HepG2 (cell line): ENCODE measurements at regions of chr1 and their contacts with region 1.

Region 1: DNA sequence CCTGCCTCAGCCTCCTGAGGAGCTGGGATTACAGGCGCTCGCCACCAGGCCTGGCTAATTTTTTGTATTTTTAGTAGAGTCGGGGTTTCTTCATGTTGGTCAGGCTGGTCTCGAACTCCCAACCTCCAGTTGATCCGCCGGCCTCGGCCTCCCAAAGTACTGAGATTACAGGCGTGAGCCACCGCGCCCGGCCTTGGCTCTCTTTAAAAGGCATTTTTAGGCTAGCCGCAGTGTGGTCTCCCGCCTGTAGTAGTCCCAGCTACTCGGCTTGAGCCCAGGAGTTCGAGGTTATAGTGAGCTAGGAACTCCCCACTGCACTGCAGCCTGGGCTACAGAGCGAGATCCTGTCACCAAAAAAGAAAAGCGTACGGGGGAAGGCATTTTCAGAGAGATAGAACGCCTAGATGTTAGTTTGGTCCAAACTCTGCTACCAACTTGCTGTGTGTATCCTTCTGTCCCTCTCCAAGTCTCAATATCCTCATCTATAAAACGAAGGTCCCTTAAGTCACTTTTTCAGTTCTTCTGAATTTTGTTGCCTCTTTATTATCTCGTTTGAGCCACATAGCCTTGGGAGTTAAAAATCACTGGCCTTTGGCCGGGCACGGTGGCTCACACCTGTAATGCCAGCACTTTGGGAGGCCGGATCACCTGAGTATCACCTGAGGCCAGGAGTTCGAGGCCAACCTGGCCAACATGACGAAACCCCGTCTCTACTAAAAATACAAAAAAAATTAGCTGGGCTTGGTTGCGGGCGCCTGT is 734 bp downstream of the MED18 start:
- DNase-seq: peak; percentile 21
- ATAC-seq: peak; percentile 75
- H3K4me3 ChIP-seq: peak overlapping the region; percentile 61 to 90 (median 80)
- H3K27ac ChIP-seq: peak overlapping the region; percentile 90
- H3K4me1 ChIP-seq: peaks cover 32% of the 10 kb centered on the region
- H3K27me3 ChIP-seq: no peaks in the 10 kb centered on the region
- CTCF ChIP-seq: no peak
- EP300 ChIP-seq: no peak
- POLR2A ChIP-seq: no peak
- RAD21 ChIP-seq: no peak

Region 2: DNA sequence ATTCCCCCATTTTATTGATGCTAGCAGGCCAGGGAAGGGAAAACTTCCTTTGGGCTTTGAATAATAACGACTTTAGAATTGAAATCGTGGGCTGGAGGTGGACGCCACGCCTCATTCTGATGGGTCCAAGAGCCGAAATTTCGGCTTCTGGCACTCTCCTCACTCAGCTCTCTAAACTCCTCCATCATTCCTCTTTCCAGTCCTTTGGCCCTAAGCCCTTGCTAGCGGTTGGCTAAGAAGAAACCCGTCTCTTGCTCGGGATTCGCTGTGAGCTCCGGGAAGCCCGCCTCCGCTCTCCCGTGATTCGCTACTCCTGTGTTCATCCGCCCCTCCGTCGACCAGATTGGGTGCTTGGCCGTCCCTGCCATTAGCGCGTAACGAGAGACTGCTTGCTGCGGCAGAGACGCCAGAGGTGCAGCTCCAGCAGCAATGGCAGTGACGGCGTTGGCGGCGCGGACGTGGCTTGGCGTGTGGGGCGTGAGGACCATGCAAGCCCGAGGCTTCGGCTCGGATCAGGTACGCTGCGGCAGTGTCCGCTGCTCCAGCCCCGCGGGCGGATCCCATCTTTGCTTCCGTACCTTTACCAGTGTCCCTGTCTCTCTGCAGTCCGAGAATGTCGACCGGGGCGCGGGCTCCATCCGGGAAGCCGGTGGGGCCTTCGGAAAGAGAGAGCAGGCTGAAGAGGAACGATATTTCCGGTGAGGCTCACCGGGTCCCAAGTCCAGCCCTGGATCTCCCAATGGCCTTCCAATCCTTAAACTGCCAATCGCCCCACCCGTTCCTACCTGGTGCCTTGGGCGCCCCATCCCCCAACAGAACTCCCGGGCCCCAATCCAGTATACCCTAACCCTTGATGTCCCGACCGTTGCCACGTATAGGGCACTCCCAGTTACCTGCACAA is 93.6 kb before region 1 on chr1 and contains the start of gene ATP5IF1:
- CTCF ChIA-PET with region 1: no interaction called
- POLR2A ChIA-PET with region 1: interaction called, 13 read pairs
- in situ Hi-C with region 1: no loop called
- intact Hi-C with region 1: no loop called
- DNase-seq: peak; percentile 96
- ATAC-seq: peak; percentile 96
- H3K4me3 ChIP-seq: peak within 1 kb of the TSS; percentile 82 to 95 (median 93)
- H3K27ac ChIP-seq: peak within 1 kb of the TSS; percentile 91
- H3K4me1 ChIP-seq: peaks cover 40% of the 10 kb centered on the region
- H3K27me3 ChIP-seq: peaks cover 0 to 2% of the 10 kb centered on the region in 2 experiments; a peak in 1 of 5 replicates
- CTCF ChIP-seq: no peak; the same call in 1 of the 2 replicates
- EP300 ChIP-seq: no peak
- POLR2A ChIP-seq: peak; percentile 95 to 99
- RAD21 ChIP-seq: no peak; the same call in 1 of the 2 replicates
- total RNA-seq, gene ATP5IF1: 131 and 143 TPM in 2 replicates

Region 3: GRCh38 chr1:28259307-28260167 is 70.0 kb before region 1 on chr1 and contains the start of gene SESN2:
- CTCF ChIA-PET with region 1: no interaction called
- POLR2A ChIA-PET with region 1: interaction called, 12 read pairs
- in situ Hi-C with region 1: no loop called
- intact Hi-C with region 1: loop called (anchors 10 kb)
- DNase-seq: peak; percentile 95
- ATAC-seq: peak; percentile 92
- H3K4me3 ChIP-seq: peak within 1 kb of the TSS; percentile 98 to 99 (median 99)
- H3K27ac ChIP-seq: peak within 1 kb of the TSS; percentile 70
- H3K4me1 ChIP-seq: peaks cover 58% of the 10 kb centered on the region
- H3K27me3 ChIP-seq: peaks cover 0 to 1% of the 10 kb centered on the region in 2 experiments; a peak in 1 of 5 replicates
- CTCF ChIP-seq: no peak
- EP300 ChIP-seq: 0 out of 4 replicates have a peak, but pooled peaks of 1 of the 2 experiments have one; percentile 27
- POLR2A ChIP-seq: peak; percentile 95 to 96
- RAD21 ChIP-seq: no peak; the same call in 1 of the 2 replicates
- total RNA-seq, gene SESN2: 10.4 and 13.2 TPM in 2 replicates

Region 4: DNA sequence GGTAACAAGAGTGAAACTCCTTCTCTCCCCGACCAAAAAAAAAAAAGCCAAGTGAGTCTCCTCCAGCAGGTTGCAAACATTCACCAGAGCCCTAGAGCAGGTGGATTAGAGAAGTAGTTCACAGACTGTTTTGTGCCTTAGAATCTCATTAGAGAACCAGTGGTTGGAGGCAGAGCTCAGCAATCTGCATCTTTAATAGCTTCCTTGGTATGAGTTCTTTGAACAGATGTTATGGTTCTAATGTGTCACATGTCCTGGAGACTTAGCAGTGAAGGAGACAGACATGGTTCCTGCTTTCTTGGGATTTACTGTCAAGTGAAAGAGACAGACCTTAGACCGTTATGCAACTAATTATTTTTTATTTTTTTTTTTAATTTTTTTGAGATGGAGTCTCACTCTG is 43.5 kb before region 1 on chr1:
- CTCF ChIA-PET with region 1: no interaction called
- POLR2A ChIA-PET with region 1: interaction called, 11 read pairs
- in situ Hi-C with region 1: no loop called
- intact Hi-C with region 1: no loop called
- DNase-seq: no peak
- ATAC-seq: no peak
- H3K4me3 ChIP-seq: no peak overlapping the region
- H3K27ac ChIP-seq: no peak overlapping the region
- H3K4me1 ChIP-seq: peaks cover 46% of the 10 kb centered on the region
- H3K27me3 ChIP-seq: no peaks in the 10 kb centered on the region
- CTCF ChIP-seq: no peak
- EP300 ChIP-seq: no peak
- POLR2A ChIP-seq: no peak
- RAD21 ChIP-seq: no peak

Region 5: GRCh38 chr1:28313710-28314546 is 15.6 kb before region 1 on chr1:
- CTCF ChIA-PET with region 1: no interaction called
- POLR2A ChIA-PET with region 1: interaction called, 23 read pairs
- in situ Hi-C with region 1: no loop called
- intact Hi-C with region 1: no loop called
- DNase-seq: peak; percentile 85
- ATAC-seq: peak; percentile 100
- H3K4me3 ChIP-seq: peak overlapping the region in 2 of 3 experiments; percentile 15 to 43; a peak in 3 of 6 replicates
- H3K27ac ChIP-seq: peak overlapping the region; percentile 54
- H3K4me1 ChIP-seq: peaks cover 24% of the 10 kb centered on the region
- H3K27me3 ChIP-seq: no peaks in the 10 kb centered on the region
- CTCF ChIP-seq: peak; percentile 21; the same call in 1 of the 2 replicates
- EP300 ChIP-seq: peak in 1 of 2 experiments; percentile 47; a peak in 2 of 4 replicates
- POLR2A ChIP-seq: no peak
- RAD21 ChIP-seq: no peak